ENCODE measurements at regions of chr14 and their contacts with region 1.

Region 1: DNA sequence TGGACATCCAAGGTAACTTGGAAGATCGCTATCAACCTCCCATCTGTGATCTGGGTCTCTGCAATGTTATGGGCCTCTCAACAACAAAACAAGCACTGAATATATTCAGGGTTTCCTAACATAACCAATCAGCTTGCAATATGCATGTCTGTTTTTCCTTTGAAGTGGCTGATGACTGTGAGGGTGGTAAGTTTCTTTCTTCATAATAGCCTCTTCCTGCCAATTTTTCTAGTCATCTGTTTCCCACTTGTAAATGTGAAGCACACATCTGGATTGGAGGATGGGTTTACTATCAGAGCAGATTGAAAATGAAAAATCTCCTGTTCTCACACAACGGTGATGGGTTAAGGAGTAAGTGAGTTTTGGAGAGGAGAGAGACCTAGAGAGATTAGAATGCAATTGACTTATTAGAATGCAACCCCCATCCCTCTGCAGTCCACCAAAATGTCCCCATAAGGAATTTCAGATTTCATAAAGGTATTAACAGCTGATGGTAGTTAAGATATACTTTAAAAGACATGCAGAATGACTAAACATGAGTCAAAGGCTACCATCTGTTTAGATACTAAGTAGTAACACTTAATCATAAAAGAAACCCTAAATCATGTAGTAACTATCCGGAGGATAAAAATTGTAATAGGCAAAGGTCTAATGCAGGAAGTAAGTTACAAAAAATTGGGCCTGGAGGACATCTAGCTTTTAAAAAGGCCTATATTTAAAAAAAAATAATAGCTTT is 58.4 kb upstream of the SAV1 start:
- DNase-seq: no peak
- ATAC-seq: no peak
- H3K4me3 ChIP-seq: no peak overlapping the region
- H3K27ac ChIP-seq: peak overlapping the region in 1 of 10 donors; percentile 12
- H3K4me1 ChIP-seq: peaks cover 0 to 8% (median 0%) of the 10 kb centered on the region in 9 donors
- H3K27me3 ChIP-seq: no peaks in the 10 kb centered on the region
- CTCF ChIP-seq: no peak

Region 2: GRCh38 chr14:50512463-50512862 is 214.1 kb before region 1 on chr14:
- intact Hi-C with region 1: no loop called
- DNase-seq: no peak
- ATAC-seq: no peak
- H3K4me3 ChIP-seq: no peak overlapping the region
- H3K27ac ChIP-seq: no peak overlapping the region
- H3K4me1 ChIP-seq: peaks cover 0 to 6% (median 0%) of the 10 kb centered on the region in 9 donors
- H3K27me3 ChIP-seq: no peaks in the 10 kb centered on the region
- CTCF ChIP-seq: no peak

Region 3: DNA sequence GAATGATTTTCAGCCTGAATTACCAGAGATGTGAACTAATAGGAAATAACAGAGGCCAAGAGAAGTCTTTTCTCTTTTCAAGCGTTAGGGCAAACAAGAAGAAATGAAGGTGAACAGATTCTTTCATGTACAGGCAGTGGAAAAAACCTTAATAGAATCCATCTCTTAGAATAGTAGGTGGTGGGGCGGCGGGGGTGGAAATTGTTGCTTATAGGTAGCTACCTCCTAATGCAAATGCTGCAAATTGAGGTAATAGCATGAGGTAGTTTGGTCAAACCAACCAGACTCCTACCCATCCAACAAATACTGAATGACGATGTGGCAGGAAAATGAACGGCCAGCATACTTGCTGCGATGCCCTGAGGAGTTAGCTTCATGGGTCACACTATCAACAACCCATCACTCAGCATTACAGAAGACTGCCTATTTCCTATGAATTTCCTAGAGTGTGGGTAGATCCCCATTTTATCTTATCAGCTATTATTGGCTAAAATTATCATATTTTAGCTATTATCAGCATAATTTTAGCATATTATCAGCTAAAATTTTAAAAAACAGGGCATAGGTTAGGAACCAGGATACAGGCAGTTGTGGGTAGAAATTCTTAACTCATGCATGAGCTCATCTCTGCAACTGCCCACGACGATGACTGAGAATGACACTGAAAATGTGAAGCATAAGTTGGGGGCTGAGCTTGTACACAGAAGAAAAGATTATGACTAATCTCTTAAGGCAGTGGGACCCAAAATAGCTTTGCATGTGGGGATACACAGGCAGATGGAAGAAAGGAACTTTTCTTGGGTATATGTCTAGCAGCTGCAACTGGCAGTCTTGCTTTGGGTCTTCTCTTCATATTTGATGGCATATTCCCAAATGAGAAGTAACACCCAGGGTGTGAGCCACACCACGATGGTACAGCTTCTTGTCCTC is 35.7 kb after region 1 on chr14:
- intact Hi-C with region 1: loop called in 1 of 10 experiments (anchors 5 kb)
- DNase-seq: no peak
- ATAC-seq: no peak
- H3K4me3 ChIP-seq: no peak overlapping the region
- H3K27ac ChIP-seq: peak overlapping the region in 2 of 10 donors; percentile 11 to 53
- H3K4me1 ChIP-seq: peaks cover 0 to 17% (median 7%) of the 10 kb centered on the region in 9 donors
- H3K27me3 ChIP-seq: no peaks in the 10 kb centered on the region
- CTCF ChIP-seq: no peak

Measured in heart right ventricle (tissue), 16 donors.